IMR-90 (cell line): ENCODE measurements at regions of chr4 and their contacts with region 1.

Region 1: GRCh38 chr4:152640058-152640833 is 39.6 kb downstream of the TMEM154 start:
- DNase-seq: peak; percentile 28
- ATAC-seq: peak; percentile 84
- H3K4me3 ChIP-seq: no peak overlapping the region
- H3K27ac ChIP-seq: no peak overlapping the region
- H3K4me1 ChIP-seq: no peaks in the 10 kb centered on the region
- H3K27me3 ChIP-seq: peaks cover 9% of the 10 kb centered on the region; the same call in 1 of the 2 replicates
- CTCF ChIP-seq: peak; percentile 68
- POLR2A ChIP-seq: no peak
- RAD21 ChIP-seq: peak; percentile 68

Region 2: DNA sequence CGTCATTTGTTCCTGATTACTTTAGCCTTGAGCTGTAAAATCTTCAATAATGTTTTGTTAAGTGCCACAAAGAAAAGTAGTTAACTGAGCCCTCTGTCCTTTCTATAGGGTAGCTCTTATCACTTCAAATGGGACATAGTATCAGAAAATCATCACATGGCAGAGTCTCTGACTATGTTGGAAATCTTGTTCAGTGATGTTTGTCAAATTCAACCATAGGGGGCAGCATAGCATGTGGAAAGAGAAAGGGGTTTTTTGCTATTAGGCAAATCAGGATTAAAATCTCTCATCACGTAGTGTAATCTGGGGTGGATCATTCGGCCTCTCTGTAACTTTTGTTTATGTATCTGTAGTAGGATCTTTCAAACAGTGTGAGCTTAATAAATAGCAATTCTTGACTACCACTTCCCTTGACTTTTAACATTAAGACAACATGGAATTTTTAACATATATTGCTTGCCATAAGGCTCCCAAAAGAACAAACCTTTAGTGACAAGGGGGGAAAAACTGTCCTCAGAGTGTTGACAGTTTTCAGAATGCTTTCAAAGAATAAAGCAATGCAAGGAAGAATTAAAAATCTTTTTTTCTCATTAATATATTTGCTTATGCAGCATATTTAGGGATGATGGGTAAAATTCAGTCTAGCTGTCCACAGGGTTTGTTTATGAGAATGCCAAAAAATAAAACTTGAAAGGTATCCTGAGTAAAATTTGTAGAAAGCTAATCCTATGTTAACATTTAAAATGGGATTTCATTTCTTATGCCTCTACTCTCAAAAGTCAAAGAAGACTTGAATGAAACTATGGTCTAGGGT is 231.5 kb before region 1 on chr4:
- CTCF ChIA-PET with region 1: no interaction called
- POLR2A ChIA-PET with region 1: no interaction called
- dilution Hi-C with region 1: no loop called
- in situ Hi-C with region 1: no loop called
- intact Hi-C with region 1: loop called (anchors 1 kb)
- DNase-seq: peak; percentile 50
- ATAC-seq: peak; percentile 79
- H3K4me3 ChIP-seq: no peak overlapping the region
- H3K27ac ChIP-seq: no peak overlapping the region
- H3K4me1 ChIP-seq: no peaks in the 10 kb centered on the region
- H3K27me3 ChIP-seq: no peaks in the 10 kb centered on the region
- CTCF ChIP-seq: peak; percentile 76
- POLR2A ChIP-seq: no peak
- RAD21 ChIP-seq: peak; percentile 71

Region 3: DNA sequence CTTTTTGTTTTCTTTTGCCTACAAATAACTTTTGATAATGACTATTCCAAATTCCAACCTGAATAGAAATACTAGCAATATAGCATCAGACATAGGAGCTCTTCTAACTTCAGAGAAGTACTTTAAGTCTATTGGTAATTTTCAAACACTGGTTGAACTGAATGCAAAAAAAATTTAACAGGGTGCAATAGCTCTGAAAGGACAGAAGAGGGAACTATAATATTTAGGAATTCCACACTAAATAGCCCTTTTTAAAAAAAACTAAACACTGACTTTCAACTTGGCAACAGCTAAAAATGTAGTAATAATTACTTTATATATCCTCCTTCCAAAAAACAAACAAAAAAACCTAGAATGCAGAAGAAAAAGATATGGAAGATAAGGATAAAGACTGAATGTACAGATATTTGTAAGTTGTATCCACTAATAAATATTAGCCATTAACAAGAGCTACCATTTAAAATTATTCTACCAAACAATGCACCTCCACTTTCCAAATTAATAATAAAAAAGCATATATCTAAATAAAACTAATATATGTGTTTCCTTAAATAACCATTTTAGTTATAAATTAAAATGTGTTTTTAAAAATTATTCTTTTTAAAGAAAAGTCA is 185.7 kb before region 1 on chr4:
- CTCF ChIA-PET with region 1: interaction called, 10 read pairs
- POLR2A ChIA-PET with region 1: no interaction called
- dilution Hi-C with region 1: no loop called
- in situ Hi-C with region 1: no loop called
- intact Hi-C with region 1: loop called (anchors 1 kb)
- DNase-seq: peak; percentile 46
- ATAC-seq: peak; percentile 66
- H3K4me3 ChIP-seq: no peak overlapping the region
- H3K27ac ChIP-seq: no peak overlapping the region
- H3K4me1 ChIP-seq: peaks cover 5% of the 10 kb centered on the region; the same call in 1 of the 2 replicates
- H3K27me3 ChIP-seq: no peaks in the 10 kb centered on the region
- CTCF ChIP-seq: peak; percentile 77
- POLR2A ChIP-seq: no peak
- RAD21 ChIP-seq: peak; percentile 67

Region 4: GRCh38 chr4:152500800-152501434 is 139.3 kb before region 1 on chr4:
- CTCF ChIA-PET with region 1: interaction called, 24 read pairs
- POLR2A ChIA-PET with region 1: no interaction called
- dilution Hi-C with region 1: no loop called
- in situ Hi-C with region 1: loop called (anchors 5 kb)
- intact Hi-C with region 1: loop called (anchors 1 kb)
- DNase-seq: peak; percentile 93
- ATAC-seq: peak; percentile 74
- H3K4me3 ChIP-seq: no peak overlapping the region
- H3K27ac ChIP-seq: no peak overlapping the region
- H3K4me1 ChIP-seq: peaks cover 3% of the 10 kb centered on the region; the same call in 1 of the 2 replicates
- H3K27me3 ChIP-seq: no peaks in the 10 kb centered on the region
- CTCF ChIP-seq: peak; percentile 83
- POLR2A ChIP-seq: no peak
- RAD21 ChIP-seq: peak; percentile 81

Region 5: GRCh38 chr4:152817331-152817730 is 177.1 kb after region 1 on chr4:
- CTCF ChIA-PET with region 1: no interaction called
- POLR2A ChIA-PET with region 1: no interaction called
- dilution Hi-C with region 1: no loop called
- in situ Hi-C with region 1: no loop called
- intact Hi-C with region 1: no loop called
- DNase-seq: peak; percentile 6
- ATAC-seq: no peak
- H3K4me3 ChIP-seq: no peak overlapping the region
- H3K27ac ChIP-seq: no peak overlapping the region
- H3K4me1 ChIP-seq: no peaks in the 10 kb centered on the region
- H3K27me3 ChIP-seq: no peaks in the 10 kb centered on the region
- CTCF ChIP-seq: no peak
- POLR2A ChIP-seq: no peak
- RAD21 ChIP-seq: no peak

Region 6: DNA sequence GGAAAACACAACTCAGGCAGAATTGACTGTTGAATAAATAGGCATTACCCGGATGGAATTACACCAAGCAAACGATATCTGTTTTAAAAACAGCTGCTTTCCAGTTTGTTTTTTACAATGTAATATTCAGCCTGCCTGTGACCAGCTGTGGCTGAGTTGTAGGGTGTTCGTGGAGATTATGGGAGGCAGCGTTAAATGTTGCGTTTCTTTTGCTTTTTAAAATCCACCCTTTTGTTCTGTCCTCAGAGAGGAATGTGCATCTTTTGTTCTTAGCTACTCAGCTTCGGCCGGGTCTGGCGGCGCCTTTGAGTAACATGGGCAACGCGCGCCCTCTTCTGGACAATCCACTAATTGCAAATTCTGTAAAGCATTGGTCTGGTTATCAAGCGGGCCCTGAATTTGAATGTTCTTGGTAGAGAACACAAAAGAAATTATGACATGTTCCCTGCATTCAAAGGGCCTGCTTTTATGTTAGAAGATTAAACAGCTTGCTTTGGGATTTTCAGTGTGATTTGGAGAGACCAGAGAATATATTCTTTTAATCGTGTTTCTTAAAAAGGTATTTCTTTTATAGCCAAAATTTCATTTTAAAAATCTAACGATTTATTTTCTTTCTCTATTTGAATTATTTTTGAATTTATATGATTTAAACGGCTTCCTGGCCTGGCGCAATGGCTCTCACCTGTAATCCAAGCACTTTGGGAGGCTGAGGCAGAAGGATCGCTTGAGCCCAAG is 487.7 kb after region 1 on chr4:
- CTCF ChIA-PET with region 1: no interaction called
- POLR2A ChIA-PET with region 1: no interaction called
- dilution Hi-C with region 1: no loop called
- in situ Hi-C with region 1: no loop called
- intact Hi-C with region 1: loop called (anchors 5 kb)
- DNase-seq: peak; percentile 77
- ATAC-seq: peak; percentile 95
- H3K4me3 ChIP-seq: no peak overlapping the region
- H3K27ac ChIP-seq: no peak overlapping the region
- H3K4me1 ChIP-seq: no peaks in the 10 kb centered on the region
- H3K27me3 ChIP-seq: no peaks in the 10 kb centered on the region
- CTCF ChIP-seq: peak; percentile 94
- POLR2A ChIP-seq: no peak
- RAD21 ChIP-seq: peak; percentile 91